HCT116 (cell line): ENCODE measurements at regions of chr9 and their contacts with region 1.

Region 1: GRCh38 chr9:19650312-19650711 is 138.5 kb downstream of the SLC24A2 start:
- DNase-seq: no peak
- ATAC-seq: no peak
- H3K4me3 ChIP-seq: no peak overlapping the region
- H3K27ac ChIP-seq: no peak overlapping the region
- H3K4me1 ChIP-seq: no peaks in the 10 kb centered on the region
- H3K27me3 ChIP-seq: peaks cover 50% of the 10 kb centered on the region
- CTCF ChIP-seq: no peak
- POLR2A ChIP-seq: no peak
- RAD21 ChIP-seq: no peak

Region 2: DNA sequence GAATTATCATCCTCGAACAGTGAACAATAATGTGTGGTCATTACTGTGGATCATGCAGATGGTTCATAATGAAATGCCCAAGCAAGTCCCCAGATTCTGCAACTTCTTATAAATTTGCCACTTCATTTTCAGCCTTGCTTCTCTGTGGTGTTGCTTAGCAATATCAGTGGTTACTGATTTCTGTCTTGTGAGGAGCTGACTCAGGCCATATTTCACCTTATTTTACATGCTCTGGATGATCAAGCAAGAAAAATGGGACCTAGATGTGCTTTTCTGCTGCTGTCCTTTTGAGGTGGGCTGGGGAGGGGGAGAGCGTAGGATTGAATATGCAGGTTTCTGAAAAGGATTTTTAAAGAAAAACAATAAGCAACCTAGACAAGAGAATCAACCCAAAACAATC is 49.8 kb before region 1 on chr9:
- CTCF ChIA-PET with region 1: no interaction called
- POLR2A ChIA-PET with region 1: no interaction called
- RAD21 ChIA-PET with region 1: no interaction called
- intact Hi-C with region 1: loop called (anchors 5 kb)
- DNase-seq: no peak
- ATAC-seq: no peak
- H3K4me3 ChIP-seq: no peak overlapping the region
- H3K27ac ChIP-seq: no peak overlapping the region
- H3K4me1 ChIP-seq: no peaks in the 10 kb centered on the region
- H3K27me3 ChIP-seq: peaks cover 25% of the 10 kb centered on the region; the same call in 1 of the 2 replicates
- CTCF ChIP-seq: no peak
- POLR2A ChIP-seq: no peak
- RAD21 ChIP-seq: no peak

Region 3: GRCh38 chr9:20701060-20701459 is 1050.7 kb after region 1 on chr9:
- CTCF ChIA-PET with region 1: no interaction called
- POLR2A ChIA-PET with region 1: no interaction called
- RAD21 ChIA-PET with region 1: no interaction called
- intact Hi-C with region 1: no loop called
- DNase-seq: no peak
- ATAC-seq: no peak
- H3K4me3 ChIP-seq: no peak overlapping the region
- H3K27ac ChIP-seq: no peak overlapping the region
- H3K4me1 ChIP-seq: no peaks in the 10 kb centered on the region
- H3K27me3 ChIP-seq: no peaks in the 10 kb centered on the region
- CTCF ChIP-seq: no peak
- POLR2A ChIP-seq: no peak
- RAD21 ChIP-seq: no peak